AG04450 (cell line): ENCODE measurements at regions of chr14 and their contacts with region 1.

Region 1: DNA sequence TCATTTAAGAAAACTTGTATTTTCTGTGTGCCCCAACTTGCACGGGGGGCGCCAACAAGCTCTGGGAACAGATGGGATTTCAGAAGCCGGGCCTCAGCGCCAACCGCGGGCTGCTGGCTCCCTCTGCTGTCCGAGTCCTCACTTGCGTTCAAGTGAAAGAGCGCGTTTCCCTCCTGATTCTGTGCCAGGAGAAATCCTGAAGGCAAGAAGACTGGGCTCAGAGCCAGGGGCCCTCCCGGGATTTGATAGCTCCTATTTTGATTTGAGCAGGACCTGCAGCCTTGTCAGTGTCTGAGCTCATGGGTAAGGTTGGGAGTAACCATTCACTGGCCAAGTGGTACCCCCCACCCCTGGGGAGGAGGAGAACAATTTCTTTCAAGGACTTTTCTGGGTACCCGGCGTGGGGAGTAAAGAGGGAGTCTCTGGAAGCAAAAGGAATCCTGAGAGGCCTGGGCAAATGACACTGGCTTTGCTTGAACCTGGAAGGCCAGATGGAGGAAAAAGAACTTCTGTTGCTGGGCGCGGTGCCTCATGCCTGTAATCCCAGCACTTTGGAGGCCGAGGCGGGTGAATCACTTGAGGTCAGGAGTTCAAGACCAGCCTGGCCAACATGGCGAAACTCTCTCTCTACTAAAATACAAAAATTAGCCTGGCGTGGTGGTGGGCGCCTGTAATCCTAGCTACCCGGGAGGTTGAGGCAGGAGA is 179.0 kb upstream of the RGS6 start:
- DNase-seq: peak; percentile 80
- H3K4me3 ChIP-seq: no peak overlapping the region
- H3K27ac ChIP-seq: peak overlapping the region; percentile 11
- H3K27me3 ChIP-seq: no peaks in the 10 kb centered on the region
- CTCF ChIP-seq: peak; percentile 95

Region 2: GRCh38 chr14:71103662-71104484 is 649.4 kb before region 1 on chr14:
- CTCF ChIA-PET with region 1: interaction called, 56 read pairs
- POLR2A ChIA-PET with region 1: no interaction called
- DNase-seq: peak; percentile 42
- H3K4me3 ChIP-seq: no peak overlapping the region
- H3K27ac ChIP-seq: no peak overlapping the region
- H3K27me3 ChIP-seq: no peaks in the 10 kb centered on the region
- CTCF ChIP-seq: peak; percentile 88

Region 3: GRCh38 chr14:71138448-71139293 is 614.6 kb before region 1 on chr14:
- CTCF ChIA-PET with region 1: interaction called, 68 read pairs
- POLR2A ChIA-PET with region 1: no interaction called
- DNase-seq: peak; percentile 13
- H3K4me3 ChIP-seq: no peak overlapping the region; the same call in 1 of the 2 replicates
- H3K27ac ChIP-seq: no peak overlapping the region
- H3K27me3 ChIP-seq: no peaks in the 10 kb centered on the region
- CTCF ChIP-seq: peak; percentile 96

Region 4: GRCh38 chr14:71576472-71576871 is 176.8 kb before region 1 on chr14:
- CTCF ChIA-PET with region 1: no interaction called
- POLR2A ChIA-PET with region 1: no interaction called
- DNase-seq: no peak
- H3K4me3 ChIP-seq: no peak overlapping the region
- H3K27ac ChIP-seq: no peak overlapping the region
- H3K27me3 ChIP-seq: no peaks in the 10 kb centered on the region
- CTCF ChIP-seq: no peak

Region 5: GRCh38 chr14:71711619-71712018 is 41.7 kb before region 1 on chr14:
- CTCF ChIA-PET with region 1: interaction called, 21 read pairs
- POLR2A ChIA-PET with region 1: no interaction called
- DNase-seq: no peak
- H3K4me3 ChIP-seq: no peak overlapping the region
- H3K27ac ChIP-seq: peak overlapping the region; percentile 83
- H3K27me3 ChIP-seq: no peaks in the 10 kb centered on the region
- CTCF ChIP-seq: no peak

Region 6: DNA sequence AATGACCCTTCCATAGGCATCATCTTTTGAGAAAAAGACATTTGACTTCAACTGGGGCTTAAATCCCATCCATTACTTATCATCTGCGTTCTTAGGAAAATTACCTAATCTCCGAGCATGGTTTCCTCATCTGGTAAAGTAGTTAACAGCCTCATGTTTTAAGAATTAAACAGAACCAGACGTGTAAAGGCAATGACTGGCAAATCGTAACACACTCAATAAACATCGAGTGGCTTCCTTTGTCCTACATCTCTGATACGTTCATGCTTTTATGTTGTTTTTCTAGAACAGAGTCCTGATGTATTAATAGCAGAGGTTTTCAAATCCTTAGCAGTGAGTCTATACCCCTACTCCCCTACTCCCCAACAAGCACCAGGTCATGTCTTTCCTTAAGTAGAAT is 10.8 kb before region 1 on chr14:
- CTCF ChIA-PET with region 1: interaction called, 20 read pairs
- POLR2A ChIA-PET with region 1: no interaction called
- DNase-seq: no peak
- H3K4me3 ChIP-seq: no peak overlapping the region
- H3K27ac ChIP-seq: no peak overlapping the region
- H3K27me3 ChIP-seq: no peaks in the 10 kb centered on the region
- CTCF ChIP-seq: no peak

Region 7: GRCh38 chr14:71783085-71783484 is 29.8 kb after region 1 on chr14:
- CTCF ChIA-PET with region 1: interaction called, 10 read pairs
- POLR2A ChIA-PET with region 1: no interaction called
- DNase-seq: no peak
- H3K4me3 ChIP-seq: no peak overlapping the region
- H3K27ac ChIP-seq: no peak overlapping the region
- H3K27me3 ChIP-seq: peaks cover 2% of the 10 kb centered on the region
- CTCF ChIP-seq: no peak